CD8-positive, alpha-beta T cell (primary cell): ENCODE measurements at regions of chr1 and their contacts with region 1.

Region 1: GRCh38 chr1:52726265-52727113 is at the start of gene ZYG11B:
- DNase-seq: peak; percentile 80 to 95 (median 89)
- ATAC-seq: peak; percentile 89
- H3K4me3 ChIP-seq: peak within 1 kb of the TSS; percentile 56 to 72
- H3K4me3 Mint-ChIP-seq: peak within 1 kb of the TSS; percentile 90
- H3K27ac ChIP-seq: peak within 1 kb of the TSS; percentile 37 to 48
- H3K27ac Mint-ChIP-seq: peak within 1 kb of the TSS; percentile 84
- H3K4me1 ChIP-seq: peaks cover 16% of the 10 kb centered on the region
- H3K4me1 Mint-ChIP-seq: peaks cover 42% of the 10 kb centered on the region
- H3K27me3 ChIP-seq: peaks cover 0 to 3% of the 10 kb centered on the region in 2 experiments
- H3K27me3 Mint-ChIP-seq: peaks cover 3% of the 10 kb centered on the region
- CTCF ChIP-seq: no peak
- total RNA-seq, gene ZYG11B: 9.8 to 10.4 TPM

Region 2: DNA sequence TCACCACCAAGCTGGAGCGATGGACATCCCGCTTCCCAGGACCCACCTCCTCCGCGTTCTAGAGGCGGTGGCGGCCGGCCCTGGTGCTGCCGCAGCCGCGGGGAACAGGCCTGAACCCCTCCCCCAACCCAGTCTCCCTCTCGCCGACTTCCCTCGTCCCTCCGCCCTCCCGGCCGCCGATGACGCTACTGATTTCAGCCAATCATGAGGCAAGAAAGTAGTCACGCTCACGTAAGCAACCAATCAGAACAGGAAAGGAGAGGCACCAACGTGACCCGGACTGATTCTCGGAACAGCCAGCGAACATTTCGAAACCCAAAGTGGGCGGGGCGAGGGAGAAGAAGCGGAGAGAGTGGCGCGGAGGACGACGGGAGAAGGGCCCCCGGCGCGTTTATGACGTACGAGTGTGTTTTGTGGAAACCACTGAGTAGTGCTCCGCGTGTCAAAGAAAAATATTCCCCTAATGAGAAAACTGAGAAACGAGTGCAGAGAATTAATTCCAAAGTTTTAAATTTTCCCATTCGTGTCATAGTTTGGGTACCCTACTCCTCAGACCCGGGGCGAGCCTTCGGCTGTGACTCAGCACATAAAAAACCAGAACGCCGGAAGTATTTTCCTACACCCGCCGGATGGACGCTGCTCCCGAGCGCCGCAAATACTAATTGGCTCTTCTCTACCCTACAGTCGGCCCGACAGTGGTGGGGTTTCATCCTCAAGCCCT is 847.7 kb before region 1 on chr1 and contains the start of gene NRDC:
- CTCF ChIA-PET with region 1: no interaction called
- POLR2A ChIA-PET with region 1: no interaction called
- intact Hi-C with region 1: loop called in 1 of 2 experiments (anchors 10 kb)
- DNase-seq: peak; percentile 99 to 100 (median 99)
- ATAC-seq: peak; percentile 89
- H3K4me3 ChIP-seq: peak within 1 kb of the TSS; percentile 90 to 99
- H3K4me3 Mint-ChIP-seq: no peak within 1 kb of the TSS
- H3K27ac ChIP-seq: peak within 1 kb of the TSS; percentile 89 to 97
- H3K27ac Mint-ChIP-seq: no peak within 1 kb of the TSS
- H3K4me1 ChIP-seq: peaks cover 30% of the 10 kb centered on the region
- H3K4me1 Mint-ChIP-seq: peaks cover 26% of the 10 kb centered on the region
- H3K27me3 ChIP-seq: peaks cover 0 to 2% of the 10 kb centered on the region in 2 experiments
- H3K27me3 Mint-ChIP-seq: peaks cover 13% of the 10 kb centered on the region
- CTCF ChIP-seq: no peak
- total RNA-seq, gene NRDC: 47.6 to 54.3 TPM

Region 3: GRCh38 chr1:52552505-52553361 is 173.8 kb before region 1 on chr1 and contains the start of gene TUT4:
- CTCF ChIA-PET with region 1: no interaction called
- POLR2A ChIA-PET with region 1: no interaction called
- intact Hi-C with region 1: loop called in 1 of 2 experiments (anchors 5 kb)
- DNase-seq: peak; percentile 55 to 87 (median 73)
- ATAC-seq: peak; percentile 56
- H3K4me3 ChIP-seq: peak within 1 kb of the TSS; percentile 87 to 96
- H3K4me3 Mint-ChIP-seq: peak within 1 kb of the TSS; percentile 70
- H3K27ac ChIP-seq: peak within 1 kb of the TSS; percentile 92 to 96
- H3K27ac Mint-ChIP-seq: peak within 1 kb of the TSS; percentile 69
- H3K4me1 ChIP-seq: peaks cover 35% of the 10 kb centered on the region
- H3K4me1 Mint-ChIP-seq: peaks cover 40% of the 10 kb centered on the region
- H3K27me3 ChIP-seq: no peaks in the 10 kb centered on the region
- H3K27me3 Mint-ChIP-seq: no peaks in the 10 kb centered on the region
- CTCF ChIP-seq: peak; percentile 8
- total RNA-seq, gene TUT4: 133 to 134 TPM

Region 4: GRCh38 chr1:52662645-52663313 is 63.7 kb before region 1 on chr1:
- CTCF ChIA-PET with region 1: no interaction called
- POLR2A ChIA-PET with region 1: no interaction called
- intact Hi-C with region 1: no loop called
- DNase-seq: no peak
- ATAC-seq: no peak
- H3K4me3 ChIP-seq: no peak overlapping the region
- H3K4me3 Mint-ChIP-seq: no peak overlapping the region
- H3K27ac ChIP-seq: no peak overlapping the region
- H3K27ac Mint-ChIP-seq: peak overlapping the region; percentile 73
- H3K4me1 ChIP-seq: no peaks in the 10 kb centered on the region
- H3K4me1 Mint-ChIP-seq: peaks cover 10% of the 10 kb centered on the region
- H3K27me3 ChIP-seq: no peaks in the 10 kb centered on the region
- H3K27me3 Mint-ChIP-seq: no peaks in the 10 kb centered on the region
- CTCF ChIP-seq: no peak

Region 5: DNA sequence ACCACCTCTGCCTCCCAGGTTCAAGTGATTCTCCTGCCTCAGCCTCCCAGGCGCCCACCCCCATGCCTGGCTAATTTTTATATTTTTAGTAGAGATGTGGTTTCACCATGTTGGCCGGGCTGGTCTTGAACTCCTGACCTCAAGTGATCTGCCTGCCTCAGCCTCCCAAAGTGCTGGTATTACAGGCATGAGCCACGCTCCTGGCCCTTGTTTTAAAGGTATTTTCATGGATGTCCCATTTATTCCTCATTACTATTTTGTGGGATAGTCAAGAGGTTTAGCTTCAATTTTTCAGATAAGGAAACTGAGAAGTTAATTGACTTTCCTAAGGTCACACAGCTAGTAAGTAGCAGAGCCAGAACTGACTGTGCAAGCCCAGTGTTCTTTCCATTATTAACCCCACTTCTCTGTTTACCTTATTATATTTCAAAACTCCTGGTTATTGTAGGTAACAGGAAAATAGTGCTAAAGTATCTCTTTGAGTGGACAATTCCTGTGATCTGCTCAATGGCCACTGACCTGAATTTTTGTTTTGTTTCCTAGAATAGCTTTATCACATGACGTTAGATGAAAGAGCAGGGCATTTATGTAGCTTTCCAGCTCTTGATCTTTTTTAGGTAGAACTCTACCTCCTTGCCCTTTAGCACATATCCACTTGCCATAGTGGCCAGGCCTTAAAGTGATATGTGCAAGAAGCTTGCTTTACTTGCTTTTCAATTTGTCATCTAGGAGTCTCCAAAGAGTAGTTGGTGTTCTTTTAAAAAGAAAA is 13.4 kb after region 1 on chr1:
- CTCF ChIA-PET with region 1: no interaction called
- POLR2A ChIA-PET with region 1: interaction called, 3 read pairs
- intact Hi-C with region 1: loop called in 1 of 2 experiments (anchors 2 kb)
- DNase-seq: no peak
- ATAC-seq: no peak
- H3K4me3 ChIP-seq: no peak overlapping the region
- H3K4me3 Mint-ChIP-seq: no peak overlapping the region
- H3K27ac ChIP-seq: no peak overlapping the region
- H3K27ac Mint-ChIP-seq: no peak overlapping the region
- H3K4me1 ChIP-seq: no peaks in the 10 kb centered on the region
- H3K4me1 Mint-ChIP-seq: peaks cover 30% of the 10 kb centered on the region
- H3K27me3 ChIP-seq: no peaks in the 10 kb centered on the region
- H3K27me3 Mint-ChIP-seq: no peaks in the 10 kb centered on the region
- CTCF ChIP-seq: no peak

Region 6: GRCh38 chr1:53196485-53197270 is 470.2 kb after region 1 on chr1 and contains the start of gene CPT2:
- CTCF ChIA-PET with region 1: no interaction called
- POLR2A ChIA-PET with region 1: no interaction called
- intact Hi-C with region 1: loop called (anchors 5 to 10 kb)
- DNase-seq: peak; percentile 75 to 95 (median 92)
- ATAC-seq: peak; percentile 94
- H3K4me3 ChIP-seq: peak within 1 kb of the TSS; percentile 79 to 80
- H3K4me3 Mint-ChIP-seq: peak within 1 kb of the TSS; percentile 97
- H3K27ac ChIP-seq: peak within 1 kb of the TSS; percentile 95 to 96
- H3K27ac Mint-ChIP-seq: peak within 1 kb of the TSS; percentile 96
- H3K4me1 ChIP-seq: peaks cover 22% of the 10 kb centered on the region
- H3K4me1 Mint-ChIP-seq: peaks cover 38% of the 10 kb centered on the region
- H3K27me3 ChIP-seq: no peaks in the 10 kb centered on the region
- H3K27me3 Mint-ChIP-seq: no peaks in the 10 kb centered on the region
- CTCF ChIP-seq: no peak
- total RNA-seq, gene CPT2: 7.8 to 8.2 TPM